CD4-positive, alpha-beta T cell (primary cell): ENCODE measurements at regions of chr13 and their contacts with region 1.

Region 1: DNA sequence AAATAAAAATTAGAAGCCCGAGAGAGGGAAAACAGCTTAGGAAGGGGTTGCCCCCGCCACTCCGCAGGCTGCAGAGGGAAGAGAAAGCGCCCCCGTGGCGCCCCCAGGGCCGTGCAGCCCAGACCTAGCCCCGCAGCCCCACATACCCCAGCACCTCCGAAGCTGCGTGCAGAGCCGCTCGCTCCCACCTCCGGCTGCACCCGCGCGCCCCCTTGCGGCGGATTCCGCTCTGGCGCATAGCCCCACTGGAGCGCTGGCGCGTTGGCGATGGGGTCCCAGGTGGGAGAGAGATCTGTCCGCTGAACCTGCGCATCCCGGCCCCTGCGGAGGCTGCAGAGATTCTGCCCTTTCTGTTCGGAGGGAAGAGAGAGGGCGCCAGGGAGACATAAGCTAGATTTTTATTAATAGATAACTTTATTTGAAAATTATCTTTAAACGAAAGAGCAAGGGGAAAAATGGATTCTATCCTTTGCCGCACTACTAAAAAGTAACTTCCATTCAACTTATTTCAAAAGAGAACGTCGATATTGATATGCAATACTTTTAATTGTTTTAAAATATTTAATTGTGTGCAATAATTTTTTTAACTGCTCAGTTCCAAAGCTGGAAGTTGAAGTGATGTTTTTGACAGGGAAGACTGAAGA is 11.7 kb upstream of the CLN5 start:
- DNase-seq: peak; percentile 74 to 92 (median 84)
- ATAC-seq: peak; percentile 99
- H3K4me3 ChIP-seq: peak overlapping the region; percentile 16
- H3K4me3 Mint-ChIP-seq: peak overlapping the region; percentile 28
- H3K27ac ChIP-seq: no peak overlapping the region
- H3K27ac Mint-ChIP-seq: no peak overlapping the region
- H3K4me1 ChIP-seq: peaks cover 23% of the 10 kb centered on the region
- H3K4me1 Mint-ChIP-seq: peaks cover 12% of the 10 kb centered on the region
- H3K27me3 ChIP-seq: peaks cover 11 to 28% of the 10 kb centered on the region in 2 experiments
- H3K27me3 Mint-ChIP-seq: peaks cover 37% of the 10 kb centered on the region
- CTCF ChIP-seq: peak; percentile 99

Region 2: GRCh38 chr13:75812751-75813181 is 1167.4 kb before region 1 on chr13:
- CTCF ChIA-PET with region 1: no interaction called
- POLR2A ChIA-PET with region 1: no interaction called
- intact Hi-C with region 1: no loop called
- DNase-seq: no peak
- ATAC-seq: no peak
- H3K4me3 ChIP-seq: no peak overlapping the region
- H3K4me3 Mint-ChIP-seq: no peak overlapping the region
- H3K27ac ChIP-seq: no peak overlapping the region
- H3K27ac Mint-ChIP-seq: no peak overlapping the region
- H3K4me1 ChIP-seq: no peaks in the 10 kb centered on the region
- H3K4me1 Mint-ChIP-seq: peaks cover 5% of the 10 kb centered on the region
- H3K27me3 ChIP-seq: no peaks in the 10 kb centered on the region
- H3K27me3 Mint-ChIP-seq: no peaks in the 10 kb centered on the region
- CTCF ChIP-seq: no peak

Region 3: GRCh38 chr13:75876360-75877050 is 1103.7 kb before region 1 on chr13:
- CTCF ChIA-PET with region 1: no interaction called
- POLR2A ChIA-PET with region 1: no interaction called
- intact Hi-C with region 1: loop called (anchors 1 to 10 kb)
- DNase-seq: peak; percentile 13 to 76 (median 32)
- ATAC-seq: peak; percentile 93
- H3K4me3 ChIP-seq: no peak overlapping the region
- H3K4me3 Mint-ChIP-seq: peak overlapping the region; percentile 52
- H3K27ac ChIP-seq: no peak overlapping the region
- H3K27ac Mint-ChIP-seq: no peak overlapping the region
- H3K4me1 ChIP-seq: peaks cover 10% of the 10 kb centered on the region
- H3K4me1 Mint-ChIP-seq: peaks cover 15% of the 10 kb centered on the region
- H3K27me3 ChIP-seq: no peaks in the 10 kb centered on the region
- H3K27me3 Mint-ChIP-seq: peaks cover 4% of the 10 kb centered on the region
- CTCF ChIP-seq: peak; percentile 89

Region 4: DNA sequence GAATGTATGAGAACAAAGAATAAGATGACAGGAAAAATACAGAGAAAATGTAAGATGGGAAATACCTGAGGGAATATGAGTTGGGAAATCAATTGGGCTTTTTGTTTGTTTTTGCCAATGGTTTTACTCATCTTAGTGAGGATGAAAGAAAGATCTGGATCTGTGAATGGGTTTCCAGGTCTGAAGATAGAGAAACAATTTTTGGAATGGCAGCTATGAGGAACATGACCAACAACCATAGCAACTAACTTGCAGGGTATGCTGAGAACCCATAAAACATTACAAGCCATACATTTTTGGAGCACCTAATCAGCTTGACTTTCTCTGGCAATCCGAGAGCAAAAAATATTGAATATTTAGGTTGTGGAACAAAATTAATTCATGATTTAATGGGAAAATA is 384.0 kb before region 1 on chr13:
- CTCF ChIA-PET with region 1: no interaction called
- POLR2A ChIA-PET with region 1: no interaction called
- intact Hi-C with region 1: no loop called
- DNase-seq: no peak
- ATAC-seq: no peak
- H3K4me3 ChIP-seq: no peak overlapping the region
- H3K4me3 Mint-ChIP-seq: no peak overlapping the region
- H3K27ac ChIP-seq: no peak overlapping the region
- H3K27ac Mint-ChIP-seq: no peak overlapping the region
- H3K4me1 ChIP-seq: no peaks in the 10 kb centered on the region
- H3K4me1 Mint-ChIP-seq: no peaks in the 10 kb centered on the region
- H3K27me3 ChIP-seq: no peaks in the 10 kb centered on the region
- H3K27me3 Mint-ChIP-seq: no peaks in the 10 kb centered on the region
- CTCF ChIP-seq: no peak

Region 5: DNA sequence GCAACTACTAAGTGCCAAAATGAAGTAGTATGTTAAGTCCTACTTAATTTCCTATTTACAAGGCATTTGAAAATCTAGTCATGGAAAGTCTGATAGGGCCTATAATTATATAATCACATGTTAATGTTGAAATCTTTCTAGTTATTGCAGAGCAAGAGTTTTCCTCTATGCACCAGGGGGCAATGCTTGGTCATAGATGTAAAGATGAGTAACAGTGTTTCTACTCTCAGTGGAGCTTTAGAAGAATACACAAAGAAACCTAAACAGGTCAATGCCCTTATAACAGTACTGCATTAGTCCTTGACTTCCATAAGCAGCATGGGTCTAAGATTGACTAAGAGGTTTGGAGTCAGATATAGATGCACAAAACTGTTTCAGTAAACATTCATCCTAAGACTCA is 312.6 kb before region 1 on chr13:
- CTCF ChIA-PET with region 1: no interaction called
- POLR2A ChIA-PET with region 1: no interaction called
- intact Hi-C with region 1: loop called in 1 of 2 experiments (anchors 5 kb)
- DNase-seq: peak in 5 of 14 experiments; percentile 4 to 44 (median 20)
- ATAC-seq: no peak
- H3K4me3 ChIP-seq: no peak overlapping the region
- H3K4me3 Mint-ChIP-seq: no peak overlapping the region
- H3K27ac ChIP-seq: no peak overlapping the region
- H3K27ac Mint-ChIP-seq: no peak overlapping the region
- H3K4me1 ChIP-seq: no peaks in the 10 kb centered on the region
- H3K4me1 Mint-ChIP-seq: no peaks in the 10 kb centered on the region
- H3K27me3 ChIP-seq: no peaks in the 10 kb centered on the region
- H3K27me3 Mint-ChIP-seq: no peaks in the 10 kb centered on the region
- CTCF ChIP-seq: peak; percentile 30

Region 6: GRCh38 chr13:76822698-76823267 is 157.4 kb before region 1 on chr13:
- CTCF ChIA-PET with region 1: interaction called, 6 read pairs
- POLR2A ChIA-PET with region 1: no interaction called
- intact Hi-C with region 1: loop called in 1 of 2 experiments (anchors 5 kb)
- DNase-seq: peak in 4 of 14 experiments; percentile 6 to 53 (median 27)
- ATAC-seq: peak; percentile 76
- H3K4me3 ChIP-seq: no peak overlapping the region
- H3K4me3 Mint-ChIP-seq: no peak overlapping the region
- H3K27ac ChIP-seq: no peak overlapping the region
- H3K27ac Mint-ChIP-seq: no peak overlapping the region
- H3K4me1 ChIP-seq: no peaks in the 10 kb centered on the region
- H3K4me1 Mint-ChIP-seq: no peaks in the 10 kb centered on the region
- H3K27me3 ChIP-seq: no peaks in the 10 kb centered on the region
- H3K27me3 Mint-ChIP-seq: peaks cover 11% of the 10 kb centered on the region
- CTCF ChIP-seq: no peak

Region 7: GRCh38 chr13:76991796-76992547 is 11.8 kb after region 1 on chr13 and contains the start of gene CLN5:
- CTCF ChIA-PET with region 1: interaction called, 20 read pairs
- POLR2A ChIA-PET with region 1: interaction called, 25 read pairs
- intact Hi-C with region 1: loop called in 1 of 2 experiments (anchors 2 kb)
- DNase-seq: peak; percentile 89 to 99 (median 95)
- ATAC-seq: peak; percentile 85
- H3K4me3 ChIP-seq: peak within 1 kb of the TSS; percentile 72
- H3K4me3 Mint-ChIP-seq: peak within 1 kb of the TSS; percentile 97
- H3K27ac ChIP-seq: peak within 1 kb of the TSS; percentile 89 to 95
- H3K27ac Mint-ChIP-seq: peak within 1 kb of the TSS; percentile 99
- H3K4me1 ChIP-seq: peaks cover 30% of the 10 kb centered on the region
- H3K4me1 Mint-ChIP-seq: peaks cover 60% of the 10 kb centered on the region
- H3K27me3 ChIP-seq: no peaks in the 10 kb centered on the region
- H3K27me3 Mint-ChIP-seq: no peaks in the 10 kb centered on the region
- CTCF ChIP-seq: no peak
- total RNA-seq, gene CLN5: 37.4 to 42.9 TPM

Region 8: DNA sequence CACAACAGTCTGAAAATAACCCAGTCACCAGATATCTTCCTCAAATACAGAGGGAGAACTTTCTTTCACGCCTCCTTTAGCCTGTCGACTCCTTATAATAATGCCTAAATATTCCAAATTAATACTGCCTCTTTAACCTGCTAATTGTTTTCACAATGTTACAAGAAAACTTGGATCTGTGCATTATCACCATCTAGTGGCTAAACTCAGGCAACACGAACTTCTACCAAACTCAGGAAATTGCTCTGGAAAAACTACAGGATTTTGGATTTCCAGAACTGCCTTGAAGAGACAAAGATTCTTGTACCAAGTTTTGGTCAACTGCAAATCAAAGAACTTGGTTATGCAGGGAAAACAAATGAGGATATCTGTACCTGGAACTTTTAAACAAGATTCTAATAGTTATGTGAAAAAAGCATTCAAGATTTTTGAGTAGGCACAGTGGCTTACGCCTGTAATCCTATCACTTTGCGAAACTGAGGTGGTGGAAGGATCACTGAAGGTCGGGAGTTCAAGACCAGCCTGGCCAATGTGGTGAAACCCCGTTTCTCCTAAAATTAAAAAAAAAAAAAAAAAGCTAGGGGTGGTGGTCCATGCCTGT is 22.5 kb after region 1 on chr13:
- CTCF ChIA-PET with region 1: interaction called, 15 read pairs
- POLR2A ChIA-PET with region 1: no interaction called
- intact Hi-C with region 1: loop called in 1 of 2 experiments (anchors 2 kb)
- DNase-seq: peak in 3 of 14 experiments; percentile 14 to 42 (median 39)
- ATAC-seq: no peak
- H3K4me3 ChIP-seq: no peak overlapping the region
- H3K4me3 Mint-ChIP-seq: no peak overlapping the region
- H3K27ac ChIP-seq: no peak overlapping the region
- H3K27ac Mint-ChIP-seq: peak overlapping the region; percentile 51
- H3K4me1 ChIP-seq: peaks cover 7% of the 10 kb centered on the region
- H3K4me1 Mint-ChIP-seq: peaks cover 73% of the 10 kb centered on the region
- H3K27me3 ChIP-seq: no peaks in the 10 kb centered on the region
- H3K27me3 Mint-ChIP-seq: no peaks in the 10 kb centered on the region
- CTCF ChIP-seq: peak; percentile 61